Activated CD4-positive, alpha-beta T cell treated with anti-CD3 and anti-CD28 coated beads, Interleukin-2, amount 10 ng/mL, durations not matched to agents 24 days and 14 days (primary cell): ENCODE measurements at regions of chr2 and their contacts with region 1.

Region 1: DNA sequence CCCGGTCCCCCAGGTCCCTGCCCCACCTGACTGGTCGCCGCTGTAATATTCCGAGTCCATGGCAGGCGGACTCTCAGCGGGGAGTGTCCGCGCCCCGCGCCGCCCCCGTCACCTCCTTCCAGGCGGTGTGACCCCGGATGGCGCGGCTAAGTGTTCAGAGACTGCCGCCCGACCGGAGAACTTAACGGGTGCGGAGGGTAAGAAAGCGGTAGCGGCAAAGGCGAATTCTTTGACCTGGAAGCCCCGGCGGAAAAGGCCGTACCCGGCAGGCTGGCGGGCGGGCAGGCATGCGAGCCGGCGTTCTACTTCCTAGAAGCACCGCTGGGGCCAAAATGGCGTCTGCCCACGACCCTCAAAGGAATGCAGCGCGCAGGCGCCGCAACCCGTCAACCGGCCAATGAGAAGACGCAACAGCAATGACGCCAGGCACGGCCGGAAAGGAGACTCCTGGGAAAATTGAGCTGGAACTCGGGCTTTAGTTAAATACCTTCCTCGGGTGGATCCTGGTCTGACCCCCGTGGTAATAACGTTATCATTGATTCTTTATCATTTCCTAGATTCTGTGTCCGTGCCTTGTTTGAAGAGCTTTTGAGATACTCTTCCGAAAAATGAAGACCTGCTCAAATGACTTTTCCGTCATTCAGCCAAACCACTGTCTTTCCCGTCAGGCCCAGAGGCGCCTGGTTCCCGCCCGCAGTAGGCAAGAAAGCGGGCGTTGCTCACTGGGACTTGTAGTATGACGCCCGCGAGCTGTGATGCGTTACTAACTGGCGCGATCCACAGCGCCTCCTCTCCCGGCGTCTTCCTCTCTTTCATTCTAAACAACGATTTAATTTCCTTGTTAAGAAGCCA is at the start of gene IWS1:
- DNase-seq: peak; percentile 98
- H3K4me3 Mint-ChIP-seq: peak within 1 kb of the TSS; percentile 96
- H3K27ac Mint-ChIP-seq: peak within 1 kb of the TSS; percentile 95
- H3K4me1 Mint-ChIP-seq: peaks cover 24% of the 10 kb centered on the region
- H3K27me3 Mint-ChIP-seq: peaks cover 7% of the 10 kb centered on the region
- total RNA-seq, gene IWS1: 57.6 and 61.9 TPM in 2 replicates

Region 2: GRCh38 chr2:126657636-126658318 is 868.6 kb before region 1 on chr2:
- intact Hi-C with region 1: loop called (anchors 10 kb)
- DNase-seq: peak; percentile 92
- H3K4me3 Mint-ChIP-seq: peak overlapping the region; percentile 92
- H3K27ac Mint-ChIP-seq: peak overlapping the region; percentile 98
- H3K4me1 Mint-ChIP-seq: peaks cover 55% of the 10 kb centered on the region
- H3K27me3 Mint-ChIP-seq: no peaks in the 10 kb centered on the region

Region 3: GRCh38 chr2:127415593-127416505 is 110.5 kb before region 1 on chr2:
- intact Hi-C with region 1: loop called (anchors 2 kb)
- DNase-seq: peak; percentile 92
- H3K4me3 Mint-ChIP-seq: peak overlapping the region; percentile 81
- H3K27ac Mint-ChIP-seq: peak overlapping the region; percentile 56
- H3K4me1 Mint-ChIP-seq: peaks cover 30% of the 10 kb centered on the region
- H3K27me3 Mint-ChIP-seq: peaks cover 26% of the 10 kb centered on the region

Region 4: GRCh38 chr2:127541809-127542208 is 15.4 kb after region 1 on chr2:
- intact Hi-C with region 1: no loop called
- DNase-seq: no peak
- H3K4me3 Mint-ChIP-seq: no peak overlapping the region
- H3K27ac Mint-ChIP-seq: no peak overlapping the region
- H3K4me1 Mint-ChIP-seq: no peaks in the 10 kb centered on the region
- H3K27me3 Mint-ChIP-seq: peaks cover 38% of the 10 kb centered on the region

Region 5: DNA sequence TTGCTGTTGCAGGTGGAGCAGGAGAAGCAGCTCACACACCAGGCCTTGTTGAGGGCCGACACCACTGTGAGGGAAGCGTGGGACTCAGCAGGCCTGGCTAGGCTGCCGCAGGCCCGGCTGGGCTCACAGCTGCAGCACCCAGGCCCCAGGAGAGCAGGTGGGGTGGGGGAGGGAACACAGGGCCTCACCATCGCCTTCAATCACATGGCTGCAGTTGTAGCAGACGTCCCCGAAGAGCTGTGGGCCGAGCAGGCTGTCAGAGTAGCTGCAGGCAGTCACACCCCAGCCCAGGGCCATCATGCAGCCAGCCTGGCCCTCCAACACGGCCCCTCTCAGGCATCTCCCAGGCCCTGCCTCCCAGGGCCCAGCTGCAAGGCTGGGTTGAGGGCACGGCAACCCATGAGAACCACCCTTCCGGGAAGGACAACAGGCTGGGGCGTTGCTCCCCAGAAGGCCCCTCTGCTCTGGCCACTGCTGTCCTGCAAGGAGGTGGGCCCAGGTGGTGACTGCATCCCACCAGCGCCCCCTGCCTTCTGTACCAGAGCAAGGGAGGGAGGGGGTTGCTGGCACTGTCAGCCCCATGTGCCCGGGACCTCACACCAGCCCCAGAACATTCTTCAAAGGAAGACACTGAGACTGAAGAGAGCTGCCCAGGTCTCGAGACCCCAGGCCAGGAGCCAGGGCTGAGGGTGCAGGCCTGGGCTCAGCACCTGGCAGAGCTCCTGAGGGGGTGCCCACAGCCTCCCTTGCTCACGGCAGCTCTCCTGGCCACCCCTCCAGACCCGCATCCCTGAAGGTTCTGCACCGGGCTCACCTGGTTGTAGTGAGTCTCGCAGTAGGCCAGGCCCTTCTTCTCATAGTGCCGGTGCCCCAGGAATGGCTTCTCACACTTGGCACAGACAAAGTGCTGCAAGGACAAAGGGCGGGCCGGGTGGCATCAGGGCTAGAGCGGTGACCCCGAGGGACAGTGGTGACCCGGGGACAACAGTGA is 114.0 kb after region 1 on chr2:
- intact Hi-C with region 1: loop called (anchors 2 kb)
- DNase-seq: peak; percentile 77
- H3K4me3 Mint-ChIP-seq: peak overlapping the region; percentile 63
- H3K27ac Mint-ChIP-seq: peak overlapping the region; percentile 77
- H3K4me1 Mint-ChIP-seq: peaks cover 21% of the 10 kb centered on the region
- H3K27me3 Mint-ChIP-seq: no peaks in the 10 kb centered on the region

Region 6: DNA sequence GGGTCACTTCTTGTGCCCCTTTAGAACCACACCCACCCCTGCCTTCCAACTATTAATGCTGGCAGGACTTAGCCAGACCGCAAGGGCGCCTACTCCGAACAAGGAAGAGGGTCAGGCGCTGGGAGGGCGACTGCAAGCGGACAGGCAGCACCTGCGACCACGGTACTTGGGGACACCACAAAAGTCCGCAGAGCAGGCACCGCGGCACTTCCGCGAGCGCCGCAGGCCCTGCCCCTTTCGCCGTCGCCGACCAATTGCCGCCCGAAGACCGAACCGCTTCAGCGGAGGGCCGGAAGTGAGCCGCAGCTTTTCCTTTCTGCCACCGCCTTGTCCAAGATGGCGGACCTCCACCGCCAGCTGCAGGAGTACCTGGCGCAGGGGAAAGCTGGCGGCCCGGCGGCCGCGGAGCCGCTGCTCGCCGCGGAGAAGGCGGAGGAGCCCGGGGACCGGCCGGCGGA is 174.8 kb after region 1 on chr2 and contains the start of gene SFT2D3:
- intact Hi-C with region 1: loop called (anchors 1 kb)
- DNase-seq: peak; percentile 97
- H3K4me3 Mint-ChIP-seq: peak within 1 kb of the TSS; percentile 92
- H3K27ac Mint-ChIP-seq: peak within 1 kb of the TSS; percentile 94
- H3K4me1 Mint-ChIP-seq: peaks cover 27% of the 10 kb centered on the region
- H3K27me3 Mint-ChIP-seq: no peaks in the 10 kb centered on the region
- total RNA-seq, gene SFT2D3: 5.9 and 6.3 TPM in 2 replicates

Region 7: GRCh38 chr2:128027801-128028667 is 501.7 kb after region 1 on chr2 and contains the start of gene SAP130:
- intact Hi-C with region 1: loop called (anchors 1 kb)
- DNase-seq: peak; percentile 99
- H3K4me3 Mint-ChIP-seq: peak within 1 kb of the TSS; percentile 89
- H3K27ac Mint-ChIP-seq: peak within 1 kb of the TSS; percentile 92
- H3K4me1 Mint-ChIP-seq: peaks cover 17% of the 10 kb centered on the region
- H3K27me3 Mint-ChIP-seq: peaks cover 15% of the 10 kb centered on the region
- total RNA-seq, gene SAP130: 29.8 and 32.0 TPM in 2 replicates

Region 8: DNA sequence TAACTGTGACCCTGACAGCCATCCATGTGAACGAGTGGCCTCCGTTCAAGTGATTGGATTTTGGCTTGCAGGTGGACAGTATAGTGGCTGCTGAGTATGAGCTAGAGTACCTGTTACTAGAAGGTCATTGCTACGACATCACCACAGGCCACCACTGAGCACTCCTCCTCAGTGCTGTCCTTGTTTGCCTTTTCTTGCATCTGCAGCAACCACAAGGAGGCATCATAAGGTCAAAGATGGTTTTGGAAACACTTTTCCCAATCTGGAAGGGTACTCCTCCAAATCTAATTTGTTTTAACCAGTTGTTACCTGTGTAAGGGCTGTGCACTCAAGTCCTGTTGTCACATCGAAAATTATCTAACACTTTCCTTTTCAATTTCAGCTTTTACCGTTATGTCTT is 645.8 kb after region 1 on chr2:
- intact Hi-C with region 1: no loop called
- DNase-seq: no peak
- H3K4me3 Mint-ChIP-seq: no peak overlapping the region
- H3K27ac Mint-ChIP-seq: no peak overlapping the region
- H3K4me1 Mint-ChIP-seq: peaks cover 14% of the 10 kb centered on the region
- H3K27me3 Mint-ChIP-seq: no peaks in the 10 kb centered on the region